Caco-2 (cell line): ENCODE measurements at regions of chr13 and their contacts with region 1.

Region 1: DNA sequence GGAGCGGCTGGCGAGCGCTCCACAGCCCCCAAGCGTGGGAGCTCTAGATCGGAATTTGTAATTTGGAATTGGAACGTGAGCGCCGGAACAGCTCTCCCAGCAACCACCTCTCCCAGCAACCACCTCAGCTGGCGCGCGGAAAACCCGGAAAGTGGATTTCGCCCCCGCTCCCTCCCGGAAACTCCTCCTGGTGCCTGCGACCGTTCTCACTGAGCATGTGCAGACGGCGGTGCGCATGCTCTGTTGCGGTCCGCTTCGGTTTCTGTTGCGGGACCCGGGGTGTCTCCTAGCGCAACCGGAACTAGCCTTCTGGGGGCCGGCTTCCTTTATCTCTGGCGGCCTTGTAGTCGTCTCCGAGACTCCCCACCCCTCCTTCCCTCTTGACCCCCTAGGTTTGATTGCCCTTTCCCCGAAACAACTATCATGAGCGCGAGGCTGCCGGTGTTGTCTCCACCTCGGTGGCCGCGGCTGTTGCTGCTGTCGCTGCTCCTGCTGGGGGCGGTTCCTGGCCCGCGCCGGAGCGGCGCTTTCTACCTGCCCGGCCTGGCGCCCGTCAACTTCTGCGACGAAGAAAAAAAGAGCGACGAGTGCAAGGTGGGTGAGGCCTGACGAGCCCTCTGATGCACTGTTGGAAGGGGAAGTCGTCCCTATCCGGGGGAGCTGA is at the start of gene TM9SF2:
- DNase-seq: peak; percentile 99
- H3K4me3 ChIP-seq: peak within 1 kb of the TSS; percentile 48
- H3K4me3 Mint-ChIP-seq: peak within 1 kb of the TSS; percentile 97
- H3K27ac Mint-ChIP-seq: peak within 1 kb of the TSS; percentile 98
- H3K4me1 ChIP-seq: peaks cover 22% of the 10 kb centered on the region
- H3K4me1 Mint-ChIP-seq: peaks cover 36% of the 10 kb centered on the region
- H3K27me3 ChIP-seq: no peaks in the 10 kb centered on the region
- H3K27me3 Mint-ChIP-seq: no peaks in the 10 kb centered on the region
- CTCF ChIP-seq: no peak
- total RNA-seq, gene TM9SF2: 154 and 155 TPM in 2 replicates

Region 2: DNA sequence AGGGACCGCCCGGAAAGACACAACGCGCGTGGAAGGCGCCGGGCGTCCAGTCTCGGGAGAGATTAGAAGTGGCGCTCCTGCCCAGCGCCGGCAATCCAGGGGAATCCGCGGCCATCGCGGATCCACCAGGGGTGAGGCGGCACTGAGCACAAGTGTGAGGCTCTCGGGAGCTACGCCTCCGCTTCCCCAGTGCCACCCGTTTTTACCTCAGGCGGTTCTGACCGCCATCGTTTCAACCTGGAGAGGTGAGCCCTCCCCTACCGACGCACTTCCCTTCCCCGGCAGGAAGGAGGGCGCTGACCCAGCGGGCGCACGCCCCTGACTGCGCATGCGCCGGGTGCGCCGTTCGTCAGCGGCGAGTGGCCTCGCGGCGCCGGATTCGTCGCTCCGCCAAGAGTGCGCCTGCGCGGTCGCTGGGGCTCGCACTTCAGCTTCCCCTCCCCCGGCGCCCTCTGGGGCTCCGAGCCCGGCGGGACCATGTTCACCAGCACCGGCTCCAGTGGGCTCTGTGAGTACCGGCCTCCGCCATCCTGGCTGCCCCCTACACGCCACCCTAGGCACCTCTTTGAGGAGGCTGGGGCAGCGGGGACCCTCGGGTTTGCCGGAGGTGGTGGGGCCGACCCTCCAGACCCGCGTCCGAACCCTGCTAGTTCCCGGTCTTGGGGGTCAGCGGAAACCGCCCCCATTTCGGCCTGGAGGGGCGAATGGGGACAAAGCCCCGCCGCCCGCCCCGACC is 300.7 kb before region 1 on chr13 and contains the start of gene UBAC2:
- CTCF ChIA-PET with region 1: no interaction called
- POLR2A ChIA-PET with region 1: no interaction called
- intact Hi-C with region 1: loop called (anchors 1 kb)
- DNase-seq: peak; percentile 93 to 97
- H3K4me3 ChIP-seq: peak within 1 kb of the TSS; percentile 89
- H3K4me3 Mint-ChIP-seq: peak within 1 kb of the TSS; percentile 92
- H3K27ac Mint-ChIP-seq: peak within 1 kb of the TSS; percentile 85
- H3K4me1 ChIP-seq: peaks cover 19% of the 10 kb centered on the region
- H3K4me1 Mint-ChIP-seq: peaks cover 24% of the 10 kb centered on the region
- H3K27me3 ChIP-seq: no peaks in the 10 kb centered on the region
- H3K27me3 Mint-ChIP-seq: no peaks in the 10 kb centered on the region
- CTCF ChIP-seq: peak in 1 of 2 experiments; percentile 18
- total RNA-seq, gene UBAC2: 91.3 and 103 TPM in 2 replicates

Region 3: DNA sequence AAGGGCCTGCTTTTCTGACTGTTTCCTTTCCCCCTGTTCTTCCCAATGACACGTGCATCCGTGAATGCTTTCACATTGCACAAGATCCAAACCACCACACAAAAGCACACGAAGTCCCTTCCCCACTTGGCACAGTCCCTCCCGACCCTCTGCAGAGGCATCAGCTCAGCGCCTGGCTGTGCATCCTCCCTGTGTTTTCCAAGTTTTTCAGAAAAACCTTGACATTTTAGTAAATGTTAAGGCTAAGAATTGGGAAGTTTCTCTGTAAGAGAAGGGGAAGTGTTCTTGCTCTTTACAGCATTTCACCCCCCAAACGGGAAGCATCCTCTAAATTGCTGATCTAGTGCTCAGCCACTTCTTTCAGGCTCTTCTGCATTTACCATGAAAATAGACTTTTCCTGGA is 94.5 kb before region 1 on chr13:
- CTCF ChIA-PET with region 1: no interaction called
- POLR2A ChIA-PET with region 1: no interaction called
- intact Hi-C with region 1: no loop called
- DNase-seq: no peak
- H3K4me3 ChIP-seq: no peak overlapping the region
- H3K4me3 Mint-ChIP-seq: no peak overlapping the region
- H3K27ac Mint-ChIP-seq: no peak overlapping the region
- H3K4me1 ChIP-seq: no peaks in the 10 kb centered on the region
- H3K4me1 Mint-ChIP-seq: no peaks in the 10 kb centered on the region
- H3K27me3 ChIP-seq: no peaks in the 10 kb centered on the region; the same call in 1 of the 2 replicates
- H3K27me3 Mint-ChIP-seq: peaks cover 13% of the 10 kb centered on the region
- CTCF ChIP-seq: no peak

Region 4: GRCh38 chr13:99442273-99442895 is 58.9 kb before region 1 on chr13:
- CTCF ChIA-PET with region 1: no interaction called
- POLR2A ChIA-PET with region 1: no interaction called
- intact Hi-C with region 1: loop called (anchors 2 kb)
- DNase-seq: peak in 1 of 2 experiments; percentile 69
- H3K4me3 ChIP-seq: no peak overlapping the region
- H3K4me3 Mint-ChIP-seq: no peak overlapping the region
- H3K27ac Mint-ChIP-seq: no peak overlapping the region
- H3K4me1 ChIP-seq: no peaks in the 10 kb centered on the region
- H3K4me1 Mint-ChIP-seq: no peaks in the 10 kb centered on the region
- H3K27me3 ChIP-seq: no peaks in the 10 kb centered on the region
- H3K27me3 Mint-ChIP-seq: peaks cover 5% of the 10 kb centered on the region
- CTCF ChIP-seq: peak; percentile 92 to 95

Region 5: GRCh38 chr13:99606324-99607066 is 105.2 kb after region 1 on chr13:
- CTCF ChIA-PET with region 1: interaction called, 4 read pairs
- POLR2A ChIA-PET with region 1: no interaction called
- intact Hi-C with region 1: loop called (anchors 2 kb)
- DNase-seq: peak; percentile 95
- H3K4me3 ChIP-seq: peak within 1 kb of the TSS; percentile 87
- H3K4me3 Mint-ChIP-seq: peak within 1 kb of the TSS; percentile 82
- H3K27ac Mint-ChIP-seq: peak within 1 kb of the TSS; percentile 87
- H3K4me1 ChIP-seq: peaks cover 7% of the 10 kb centered on the region
- H3K4me1 Mint-ChIP-seq: peaks cover 6% of the 10 kb centered on the region
- H3K27me3 ChIP-seq: no peaks in the 10 kb centered on the region
- H3K27me3 Mint-ChIP-seq: no peaks in the 10 kb centered on the region
- CTCF ChIP-seq: no peak